PC-9 (cell line): ENCODE measurements at regions of chr1 and their contacts with region 1.

Region 1: GRCh38 chr1:94105957-94106529 is 14.9 kb downstream of the ABCA4 start:
- DNase-seq: peak in 1 of 2 experiments; percentile 50
- H3K4me3 ChIP-seq: no peak overlapping the region
- H3K27ac ChIP-seq: peak overlapping the region; percentile 54
- H3K4me1 ChIP-seq: peaks cover 47% of the 10 kb centered on the region
- H3K27me3 ChIP-seq: no peaks in the 10 kb centered on the region
- CTCF ChIP-seq: no peak

Region 2: DNA sequence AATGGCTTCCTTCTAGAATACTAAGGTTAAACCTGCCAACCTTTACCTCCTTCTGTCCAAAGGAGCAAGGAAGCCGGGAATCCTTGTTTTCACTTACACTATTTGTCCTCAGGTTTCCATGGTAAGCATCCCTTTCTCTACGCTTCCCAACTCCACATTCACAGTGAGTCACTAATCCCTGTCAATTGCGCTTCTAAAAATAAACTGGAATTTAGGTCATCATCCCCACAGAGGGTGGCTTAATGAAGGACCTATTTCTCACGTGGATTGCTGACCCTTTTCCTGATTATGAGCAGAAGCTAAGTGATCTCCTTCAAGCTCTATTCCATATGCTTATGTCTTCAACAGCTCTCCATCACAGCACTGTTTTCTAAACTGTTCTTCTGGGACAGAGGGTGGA is 54.8 kb after region 1 on chr1:
- CTCF ChIA-PET with region 1: no interaction called
- POLR2A ChIA-PET with region 1: no interaction called
- intact Hi-C with region 1: loop called (anchors 5 kb)
- DNase-seq: peak in 1 of 2 experiments; percentile 61
- H3K4me3 ChIP-seq: no peak overlapping the region
- H3K27ac ChIP-seq: no peak overlapping the region
- H3K4me1 ChIP-seq: no peaks in the 10 kb centered on the region
- H3K27me3 ChIP-seq: no peaks in the 10 kb centered on the region
- CTCF ChIP-seq: no peak

Region 3: GRCh38 chr1:94209425-94209824 is 103.4 kb after region 1 on chr1:
- CTCF ChIA-PET with region 1: no interaction called
- POLR2A ChIA-PET with region 1: no interaction called
- intact Hi-C with region 1: no loop called
- DNase-seq: peak in 1 of 2 experiments; percentile 80
- H3K4me3 ChIP-seq: no peak overlapping the region
- H3K27ac ChIP-seq: peak overlapping the region; percentile 35
- H3K4me1 ChIP-seq: peaks cover 6% of the 10 kb centered on the region
- H3K27me3 ChIP-seq: no peaks in the 10 kb centered on the region
- CTCF ChIP-seq: no peak